ENCODE measurements at regions of chr4 and their contacts with region 1.

Region 1: GRCh38 chr4:38179690-38180377 is 219.6 kb downstream of the PTTG2 start:
- ATAC-seq: peak; percentile 67 to 91 (median 76)
- H3K4me3 ChIP-seq: no peak overlapping the region
- H3K27ac ChIP-seq: no peak overlapping the region
- H3K4me1 ChIP-seq: peaks cover 4 to 6% of the 10 kb centered on the region in 2 donors

Region 2: DNA sequence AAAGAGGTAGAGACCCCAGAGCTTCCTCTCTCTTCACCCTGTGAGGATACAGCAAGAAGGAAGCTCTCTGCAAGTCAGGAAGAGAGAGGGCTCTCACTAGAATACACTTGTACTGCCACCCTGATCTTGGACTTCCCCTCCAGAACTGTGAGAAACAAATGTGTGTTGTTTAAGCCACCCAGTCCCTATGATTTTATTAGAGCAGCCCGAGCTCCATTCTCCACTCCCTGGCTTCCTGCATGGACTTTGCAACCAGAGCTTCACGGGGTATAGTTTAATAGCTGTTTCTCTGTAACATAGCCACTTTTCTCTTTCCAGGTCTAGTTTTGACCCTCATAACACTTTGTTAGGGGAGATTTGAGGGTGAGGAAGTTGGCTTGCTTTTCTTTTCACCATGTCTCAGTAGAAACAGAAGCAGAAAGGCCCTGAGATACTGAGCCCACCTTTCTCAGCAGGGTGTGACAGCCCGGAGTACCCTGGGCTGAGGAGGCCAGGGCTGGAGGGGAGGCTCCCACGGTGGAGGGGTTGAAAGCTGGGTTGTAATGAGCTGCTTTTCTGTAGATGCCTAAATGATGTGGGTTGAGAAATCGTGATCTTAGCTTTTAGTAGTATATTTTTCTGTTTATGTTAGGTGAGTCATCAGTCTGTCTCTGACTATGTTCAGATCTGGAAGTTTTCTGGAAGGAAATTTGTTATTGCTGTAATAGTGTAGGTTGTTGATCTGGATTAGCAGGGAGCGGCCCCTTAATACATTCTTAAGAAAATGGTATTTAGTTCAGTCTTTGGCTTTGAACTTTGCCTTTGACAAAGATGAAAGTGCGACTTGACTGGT is 101.0 kb before region 1 on chr4:
- in situ Hi-C with region 1: loop called in 1 of 9 experiments (anchors 10 kb)
- ATAC-seq: no peak
- H3K4me3 ChIP-seq: no peak overlapping the region
- H3K27ac ChIP-seq: no peak overlapping the region
- H3K4me1 ChIP-seq: peaks cover 18 to 19% of the 10 kb centered on the region in 2 donors

Region 3: GRCh38 chr4:38319456-38320342 is 139.9 kb after region 1 on chr4:
- in situ Hi-C with region 1: loop called in 3 of 9 experiments (anchors 10 to 25 kb)
- ATAC-seq: peak; percentile 18 to 90 (median 80)
- H3K4me3 ChIP-seq: no peak overlapping the region
- H3K27ac ChIP-seq: no peak overlapping the region
- H3K4me1 ChIP-seq: peaks cover 8 to 12% of the 10 kb centered on the region in 2 donors

Region 4: GRCh38 chr4:38663801-38664705 is 484.2 kb after region 1 on chr4 and contains the start of gene KLF3:
- in situ Hi-C with region 1: loop called in 1 of 9 experiments (anchors 25 kb)
- ATAC-seq: peak; percentile 58 to 81 (median 76)
- H3K4me3 ChIP-seq: peak within 1 kb of the TSS; percentile 64 to 86 (median 79)
- H3K27ac ChIP-seq: peak within 1 kb of the TSS; percentile 94 to 96
- H3K4me1 ChIP-seq: peaks cover 18 to 24% of the 10 kb centered on the region in 2 donors
- total RNA-seq, gene KLF3: 16.2 to 70.0 (median 26.2) TPM

Region 5: DNA sequence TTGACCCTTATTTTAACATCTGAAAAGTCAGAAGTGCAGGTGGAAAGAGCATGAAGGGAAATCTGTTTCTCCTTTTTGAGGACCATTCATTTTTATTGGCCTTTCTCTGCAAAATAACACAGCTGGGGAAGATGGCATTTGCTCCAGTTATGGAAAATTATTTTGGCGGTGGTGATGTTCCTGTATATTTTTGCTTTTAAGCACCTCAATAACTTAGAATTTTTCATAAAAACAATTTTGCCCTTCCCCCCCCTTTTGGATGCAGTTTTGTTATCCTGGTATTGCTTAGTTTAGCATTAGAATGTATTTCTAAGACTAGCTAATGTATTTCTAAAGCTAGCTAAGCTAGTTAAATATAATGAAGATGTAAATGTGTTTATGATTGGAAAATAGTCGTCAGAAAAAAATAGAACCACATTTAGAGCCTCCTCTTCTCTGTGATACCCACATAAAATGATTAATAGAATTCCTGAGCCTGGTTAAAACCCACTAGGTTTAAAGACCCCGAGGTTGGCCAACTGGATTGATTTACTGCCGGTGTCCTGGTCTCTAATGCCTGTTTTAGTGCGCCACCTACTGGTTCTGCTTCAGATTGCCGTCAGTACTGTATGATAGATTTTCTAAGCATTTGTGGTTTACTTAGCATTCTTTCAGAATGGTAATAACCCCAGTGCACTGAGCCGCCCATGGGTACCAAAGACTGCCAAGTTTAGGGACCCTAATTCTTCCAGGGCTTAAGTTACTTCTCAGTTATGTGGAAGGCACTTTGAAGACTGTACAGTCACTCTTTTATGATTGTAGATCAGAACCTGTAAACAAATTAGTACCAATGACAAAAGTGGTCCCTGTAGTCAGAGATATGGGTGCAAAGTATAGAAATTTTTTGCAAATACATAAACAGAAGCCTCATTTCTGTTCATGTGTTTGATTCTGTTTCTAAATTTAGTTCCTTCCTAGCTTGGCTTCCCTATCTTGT is 495.6 kb after region 1 on chr4:
- in situ Hi-C with region 1: loop called in 7 of 9 experiments (anchors 5 to 25 kb)
- ATAC-seq: peak; percentile 2 to 45 (median 37)
- H3K4me3 ChIP-seq: no peak overlapping the region
- H3K27ac ChIP-seq: peak overlapping the region; percentile 5 to 63
- H3K4me1 ChIP-seq: peaks cover 60 to 61% of the 10 kb centered on the region in 2 donors

Region 6: GRCh38 chr4:38730830-38731646 is 551.2 kb after region 1 on chr4:
- in situ Hi-C with region 1: loop called in 2 of 9 experiments (anchors 25 kb)
- ATAC-seq: peak; percentile 3 to 92 (median 68)
- H3K4me3 ChIP-seq: no peak overlapping the region
- H3K27ac ChIP-seq: no peak overlapping the region
- H3K4me1 ChIP-seq: no peaks in the 10 kb centered on the region

Region 7: GRCh38 chr4:38782452-38783108 is 602.7 kb after region 1 on chr4 and contains the start of gene TLR10:
- in situ Hi-C with region 1: loop called in 1 of 9 experiments (anchors 25 kb)
- ATAC-seq: peak; percentile 49 to 72 (median 60)
- H3K4me3 ChIP-seq: no peak within 1 kb of the TSS
- H3K27ac ChIP-seq: no peak within 1 kb of the TSS
- H3K4me1 ChIP-seq: no peaks in the 10 kb centered on the region
- total RNA-seq, gene TLR10: 0.11 to 0.28 (median 0.18) TPM in 3 of 8 experiments, not detected in the others

Measured in motor neuron (in vitro differentiated cells).